Mammary epithelial cell (primary cell): ENCODE measurements at regions of chr3 and their contacts with region 1.

Region 1: GRCh38 chr3:192303235-192303634 is 424.1 kb downstream of the FGF12 start:
- DNase-seq: no peak
- H3K4me3 ChIP-seq: no peak overlapping the region
- H3K27ac ChIP-seq: no peak overlapping the region
- H3K4me1 ChIP-seq: no peaks in the 10 kb centered on the region
- H3K27me3 ChIP-seq: no peaks in the 10 kb centered on the region
- CTCF ChIP-seq: no peak

Region 2: GRCh38 chr3:192246847-192247520 is 56.3 kb before region 1 on chr3:
- CTCF ChIA-PET with region 1: no interaction called
- dilution Hi-C with region 1: no loop called
- in situ Hi-C with region 1: no loop called
- intact Hi-C with region 1: no loop called
- DNase-seq: no peak
- H3K4me3 ChIP-seq: no peak overlapping the region
- H3K27ac ChIP-seq: no peak overlapping the region
- H3K4me1 ChIP-seq: no peaks in the 10 kb centered on the region
- H3K27me3 ChIP-seq: no peaks in the 10 kb centered on the region
- CTCF ChIP-seq: no peak

Region 3: GRCh38 chr3:192259661-192260060 is 43.6 kb before region 1 on chr3:
- CTCF ChIA-PET with region 1: no interaction called
- dilution Hi-C with region 1: loop called (anchors 5 kb)
- in situ Hi-C with region 1: no loop called
- intact Hi-C with region 1: no loop called
- DNase-seq: no peak
- H3K4me3 ChIP-seq: no peak overlapping the region
- H3K27ac ChIP-seq: no peak overlapping the region
- H3K4me1 ChIP-seq: no peaks in the 10 kb centered on the region
- H3K27me3 ChIP-seq: no peaks in the 10 kb centered on the region
- CTCF ChIP-seq: no peak

Region 4: GRCh38 chr3:192336287-192336686 is 33.1 kb after region 1 on chr3:
- CTCF ChIA-PET with region 1: no interaction called
- dilution Hi-C with region 1: loop called (anchors 5 kb)
- in situ Hi-C with region 1: no loop called
- intact Hi-C with region 1: no loop called
- DNase-seq: no peak
- H3K4me3 ChIP-seq: no peak overlapping the region
- H3K27ac ChIP-seq: no peak overlapping the region
- H3K4me1 ChIP-seq: no peaks in the 10 kb centered on the region
- H3K27me3 ChIP-seq: no peaks in the 10 kb centered on the region
- CTCF ChIP-seq: peak; percentile 20 to 21